ENCODE measurements at regions of chr11 and their contacts with region 1.

Region 1: DNA sequence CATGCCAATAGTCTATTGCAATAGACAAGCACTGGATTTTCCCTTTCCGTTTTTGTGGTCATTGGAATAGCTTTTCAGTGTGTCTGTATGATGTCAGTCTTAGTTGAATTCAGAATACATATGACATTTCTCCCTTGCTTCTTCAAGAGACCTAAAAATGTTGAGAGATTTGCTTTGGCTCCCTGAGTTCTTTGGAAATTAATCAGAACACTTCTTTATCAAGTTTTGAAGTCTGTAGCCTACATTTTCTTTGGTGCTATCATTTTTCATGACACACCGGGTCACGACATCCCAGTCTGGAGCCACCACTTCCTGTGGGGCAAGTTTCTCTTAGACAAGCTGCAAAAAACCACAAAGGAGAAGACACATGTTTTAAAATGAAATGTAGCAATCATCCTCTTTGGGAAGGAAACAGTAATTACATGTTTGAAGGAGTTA is 847.1 kb downstream of the OPCML start:
- DNase-seq: no peak
- ATAC-seq: peak in 1 of 8 donors; percentile 19
- H3K4me3 ChIP-seq: no peak overlapping the region
- H3K27ac ChIP-seq: peak overlapping the region in 2 of 10 donors; percentile 6 to 25
- H3K4me1 ChIP-seq: peaks cover 0 to 27% (median 6%) of the 10 kb centered on the region in 9 donors
- H3K27me3 ChIP-seq: no peaks in the 10 kb centered on the region
- CTCF ChIP-seq: no peak

Region 2: GRCh38 chr11:132472411-132473172 is 212.6 kb before region 1 on chr11:
- intact Hi-C with region 1: no loop called
- DNase-seq: peak in 1 of 2 donors; percentile 19
- ATAC-seq: peak in 6 of 8 donors; percentile 28 to 80 (median 50)
- H3K4me3 ChIP-seq: no peak overlapping the region
- H3K27ac ChIP-seq: no peak overlapping the region
- H3K4me1 ChIP-seq: peaks cover 0 to 15% (median 0%) of the 10 kb centered on the region in 9 donors
- H3K27me3 ChIP-seq: peaks cover 0 to 19% (median 0%) of the 10 kb centered on the region in 7 donors
- CTCF ChIP-seq: peak in 3 of 9 donors; percentile 11 to 40 (median 19)

Region 3: GRCh38 chr11:132911186-132911585 is 226.0 kb after region 1 on chr11:
- intact Hi-C with region 1: loop called in 1 of 10 experiments (anchors 10 kb)
- DNase-seq: no peak
- ATAC-seq: no peak
- H3K4me3 ChIP-seq: no peak overlapping the region
- H3K27ac ChIP-seq: no peak overlapping the region
- H3K4me1 ChIP-seq: peaks cover 0 to 3% (median 0%) of the 10 kb centered on the region in 9 donors
- H3K27me3 ChIP-seq: peaks cover 0 to 21% (median 0%) of the 10 kb centered on the region in 7 donors
- CTCF ChIP-seq: no peak